Activated CD4-positive, alpha-beta T cell treated with anti-CD3 and anti-CD28 coated beads, Interleukin-2, amount 10 ng/mL, durations not matched to agents 7 days and 5 days (primary cell): ENCODE measurements at regions of chr3 and their contacts with region 1.

Region 1: DNA sequence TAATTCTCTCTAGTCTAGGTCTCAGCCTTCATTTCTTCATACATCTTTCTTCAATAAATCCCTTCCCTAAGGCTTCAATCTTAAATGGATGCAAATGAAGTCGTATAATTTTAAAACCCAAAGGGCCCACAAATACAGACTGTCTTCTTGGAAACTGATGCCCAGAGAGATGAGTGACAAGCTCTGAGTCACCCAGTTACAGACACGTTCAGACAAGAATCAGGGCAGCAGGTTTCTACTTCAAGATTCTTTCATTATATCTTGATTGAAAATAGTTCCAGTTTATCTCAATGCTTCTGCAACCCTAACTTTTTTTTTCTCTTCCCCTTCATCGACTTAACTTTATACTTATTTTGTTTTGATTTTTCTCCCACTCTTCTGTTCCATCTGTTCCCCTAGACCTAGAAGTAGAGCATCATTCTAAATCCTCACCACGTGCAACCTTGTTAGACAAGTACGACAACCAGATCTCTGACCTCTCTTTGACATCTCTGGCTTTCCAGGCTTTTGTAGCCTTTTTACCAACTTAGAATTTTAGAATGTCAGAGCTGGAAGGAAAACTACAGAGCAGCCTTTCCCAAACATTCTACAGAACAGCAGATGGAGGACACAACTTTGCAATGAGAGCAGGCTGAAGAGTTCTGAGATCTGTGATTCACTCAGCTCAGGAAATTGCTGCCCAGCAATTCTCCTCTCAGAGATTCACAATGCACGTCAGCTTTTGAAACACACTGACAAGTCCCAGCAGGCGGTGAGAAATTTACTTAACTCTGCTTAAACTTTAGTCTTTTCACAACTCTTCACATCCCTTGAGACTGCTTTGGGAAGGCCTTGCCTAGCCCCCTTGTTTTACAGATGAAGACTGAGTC is 25.3 kb downstream of the NCEH1 start:
- DNase-seq: no peak
- H3K4me3 Mint-ChIP-seq: no peak overlapping the region
- H3K27ac Mint-ChIP-seq: peak overlapping the region; percentile 21
- H3K4me1 Mint-ChIP-seq: peaks cover 15% of the 10 kb centered on the region
- H3K27me3 Mint-ChIP-seq: no peaks in the 10 kb centered on the region

Region 2: GRCh38 chr3:172607305-172608121 is 78.1 kb before region 1 on chr3:
- CTCF ChIA-PET with region 1: interaction called, 10 read pairs
- POLR2A ChIA-PET with region 1: no interaction called
- DNase-seq: no peak
- H3K4me3 Mint-ChIP-seq: no peak overlapping the region
- H3K27ac Mint-ChIP-seq: no peak overlapping the region
- H3K4me1 Mint-ChIP-seq: no peaks in the 10 kb centered on the region
- H3K27me3 Mint-ChIP-seq: no peaks in the 10 kb centered on the region

Region 3: DNA sequence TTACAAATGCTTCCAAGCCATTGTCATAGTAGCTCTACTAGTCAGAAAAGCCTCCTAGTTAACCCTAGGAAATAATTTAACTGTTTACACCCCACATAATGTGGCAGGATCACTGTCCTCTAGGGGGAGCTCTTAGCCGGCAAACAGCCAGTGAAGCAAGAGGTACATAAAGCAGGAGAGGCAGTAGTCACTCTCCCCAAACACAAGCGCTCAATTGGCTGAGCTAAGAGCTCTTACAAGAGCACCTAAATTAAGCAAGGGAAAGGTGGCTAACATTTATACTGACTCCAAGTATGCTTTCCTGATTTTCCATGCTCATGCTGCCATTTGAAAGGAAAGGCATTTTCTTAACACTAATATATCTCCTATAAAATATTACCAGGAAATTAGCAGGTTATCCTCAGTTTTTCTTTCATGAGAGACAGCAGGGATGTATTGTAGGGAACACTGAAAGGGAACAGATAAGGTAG is 12.3 kb before region 1 on chr3:
- CTCF ChIA-PET with region 1: interaction called, 16 read pairs
- POLR2A ChIA-PET with region 1: no interaction called
- DNase-seq: peak; percentile 80
- H3K4me3 Mint-ChIP-seq: no peak overlapping the region
- H3K27ac Mint-ChIP-seq: no peak overlapping the region
- H3K4me1 Mint-ChIP-seq: peaks cover 2% of the 10 kb centered on the region
- H3K27me3 Mint-ChIP-seq: no peaks in the 10 kb centered on the region

Region 4: GRCh38 chr3:172710664-172711453 is 25.3 kb after region 1 on chr3 and contains the start of gene NCEH1:
- CTCF ChIA-PET with region 1: interaction called, 10 read pairs
- POLR2A ChIA-PET with region 1: no interaction called
- DNase-seq: peak; percentile 83
- H3K4me3 Mint-ChIP-seq: peak within 1 kb of the TSS; percentile 83
- H3K27ac Mint-ChIP-seq: peak within 1 kb of the TSS; percentile 82
- H3K4me1 Mint-ChIP-seq: peaks cover 26% of the 10 kb centered on the region
- H3K27me3 Mint-ChIP-seq: peaks cover 6% of the 10 kb centered on the region
- total RNA-seq, gene NCEH1: 5.0 to 6.8 TPM